ENCODE measurements at regions of chr2 and their contacts with region 1.

Region 1: GRCh38 chr2:215920244-215921100 is 92.9 kb downstream of the MREG start:
- DNase-seq: peak; percentile 52
- H3K27ac ChIP-seq: no peak overlapping the region
- CTCF ChIP-seq: peak; percentile 85

Region 2: DNA sequence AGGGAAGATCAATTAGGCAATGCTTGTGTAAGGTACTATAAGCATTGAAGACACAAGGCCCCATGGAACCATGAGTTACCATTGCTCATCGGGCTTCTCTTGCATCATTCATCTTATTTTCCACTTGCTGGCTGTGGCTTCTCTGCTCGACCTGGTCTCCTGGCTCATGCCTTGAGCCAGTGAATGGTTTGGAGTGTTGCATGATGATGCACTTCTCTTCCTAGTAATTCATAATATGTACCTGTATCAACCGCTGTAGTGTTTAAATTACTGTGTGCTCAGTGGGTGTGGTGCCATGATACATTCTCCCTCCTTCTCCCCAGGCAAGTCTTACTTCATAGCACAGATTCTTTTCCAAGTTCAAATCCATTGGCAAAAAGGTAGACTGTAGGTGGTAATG is 848.8 kb before region 1 on chr2:
- CTCF ChIA-PET with region 1: no interaction called
- POLR2A ChIA-PET with region 1: interaction called, 10 read pairs
- DNase-seq: peak; percentile 24
- H3K27ac ChIP-seq: no peak overlapping the region
- CTCF ChIP-seq: no peak

Region 3: DNA sequence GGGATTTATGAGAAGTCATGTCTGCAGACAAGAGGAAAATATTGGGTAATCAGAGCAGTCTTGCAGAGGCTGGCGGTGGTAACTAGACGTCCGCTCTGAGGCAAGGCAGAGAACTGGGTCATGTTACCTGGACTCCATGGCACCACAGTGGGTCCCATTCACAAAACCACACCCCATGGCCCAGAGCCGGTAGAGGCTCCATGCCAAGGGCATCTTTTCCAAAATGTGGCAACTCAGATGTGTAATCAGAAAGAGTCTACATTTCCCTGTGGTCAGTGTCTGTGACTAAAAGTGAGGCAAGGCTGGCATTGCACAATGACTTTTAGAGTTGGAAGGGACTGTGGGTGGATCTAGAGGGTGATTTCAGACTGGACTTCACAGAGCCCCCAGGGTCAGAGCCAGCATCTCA is 20.3 kb before region 1 on chr2:
- CTCF ChIA-PET with region 1: no interaction called
- POLR2A ChIA-PET with region 1: no interaction called
- DNase-seq: peak; percentile 45
- H3K27ac ChIP-seq: peak overlapping the region; percentile 64
- CTCF ChIP-seq: no peak

Measured in RWPE1 (cell line).